GM18951 (cell line): ENCODE measurements at regions of chr7 and their contacts with region 1.

Region 1: GRCh38 chr7:97499204-97499603 is 232.7 kb upstream of the TAC1 start:
- POLR2A ChIP-seq: no peak

Region 2: GRCh38 chr7:97835296-97836138 is 336.3 kb after region 1 on chr7:
- in situ Hi-C with region 1: loop called (anchors 25 kb)
- POLR2A ChIP-seq: no peak

Region 3: DNA sequence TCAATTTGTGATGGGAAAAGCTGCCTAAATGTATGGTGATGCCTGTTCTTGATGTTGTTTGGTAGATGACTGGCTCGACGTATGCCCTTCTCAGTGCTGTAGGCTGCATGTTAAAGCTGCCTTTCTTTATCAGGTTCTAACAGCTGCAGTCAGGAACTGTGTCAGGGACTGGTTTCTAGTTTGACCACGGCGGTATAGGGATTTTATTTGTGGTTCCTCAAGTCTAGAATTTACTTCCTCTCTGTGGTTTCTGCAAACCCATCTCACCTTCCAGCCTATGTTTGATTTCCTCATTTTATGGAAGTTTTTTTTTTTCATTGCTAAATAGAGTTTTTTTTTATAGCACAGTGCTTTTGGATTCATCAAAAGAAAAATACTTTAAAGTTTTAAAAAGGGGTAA is 634.0 kb after region 1 on chr7:
- in situ Hi-C with region 1: no loop called
- POLR2A ChIP-seq: no peak